Left ventricle myocardium inferior (tissue), 1 donor: ENCODE measurements at regions of chr17 and their contacts with region 1.

Region 1: DNA sequence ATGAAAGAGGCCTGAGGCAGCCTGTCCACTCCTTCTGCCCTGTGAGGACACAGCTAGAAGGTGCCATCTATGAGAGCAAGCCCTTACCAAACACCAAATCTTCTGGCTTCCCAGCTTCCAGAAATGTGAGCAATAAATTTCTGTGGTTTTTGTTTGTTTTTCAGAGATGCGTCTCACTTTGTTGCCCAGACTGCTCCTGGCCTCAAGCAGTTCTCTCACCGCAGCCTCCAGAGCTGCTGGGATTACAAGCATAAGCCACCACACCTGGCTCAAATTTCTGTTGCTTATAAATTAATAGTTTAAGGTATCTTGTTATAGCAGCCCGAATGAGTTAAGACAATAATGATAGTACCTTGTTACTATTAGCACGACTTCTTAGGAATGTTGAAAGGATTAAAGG is 12.5 kb upstream of the SLC16A11 start:
- DNase-seq: no peak
- H3K4me3 ChIP-seq: no peak overlapping the region
- H3K27ac ChIP-seq: no peak overlapping the region
- H3K4me1 ChIP-seq: no peaks in the 10 kb centered on the region
- H3K27me3 ChIP-seq: peaks cover 14% of the 10 kb centered on the region
- CTCF ChIP-seq: no peak

Region 2: GRCh38 chr17:7177196-7177953 is 121.0 kb after region 1 on chr17:
- intact Hi-C with region 1: loop called (anchors 10 kb)
- DNase-seq: peak; percentile 51
- H3K4me3 ChIP-seq: peak overlapping the region; percentile 63
- H3K27ac ChIP-seq: no peak overlapping the region
- H3K4me1 ChIP-seq: peaks cover 20% of the 10 kb centered on the region
- H3K27me3 ChIP-seq: peaks cover 64% of the 10 kb centered on the region
- CTCF ChIP-seq: peak; percentile 92